ENCODE measurements at regions of chr9 and their contacts with region 1.

Region 1: GRCh38 chr9:14466429-14466818 is 152.5 kb upstream of the NFIB start:
- DNase-seq: no peak
- ATAC-seq: no peak
- H3K4me3 Mint-ChIP-seq: no peak overlapping the region
- H3K27ac Mint-ChIP-seq: no peak overlapping the region
- H3K4me1 Mint-ChIP-seq: no peaks in the 10 kb centered on the region
- H3K27me3 Mint-ChIP-seq: no peaks in the 10 kb centered on the region
- CTCF ChIP-seq: no peak

Region 2: GRCh38 chr9:14400658-14400995 is 65.8 kb before region 1 on chr9:
- CTCF ChIA-PET with region 1: no interaction called
- POLR2A ChIA-PET with region 1: no interaction called
- intact Hi-C with region 1: loop called (anchors 10 kb)
- DNase-seq: no peak
- ATAC-seq: no peak
- H3K4me3 Mint-ChIP-seq: no peak overlapping the region
- H3K27ac Mint-ChIP-seq: no peak overlapping the region
- H3K4me1 Mint-ChIP-seq: no peaks in the 10 kb centered on the region
- H3K27me3 Mint-ChIP-seq: no peaks in the 10 kb centered on the region
- CTCF ChIP-seq: no peak

Measured in activated CD8-positive, alpha-beta T cell treated with anti-CD3 and anti-CD28 coated beads for 36 hours (primary cell).